Activated B cell treated with CpG ODN at 0.5 μM for 24 hours (primary cell): ENCODE measurements at regions of chr5 and their contacts with region 1.

Region 1: GRCh38 chr5:23139338-23140171 is 286.4 kb upstream of the CDH12 start:
- DNase-seq: no peak
- ATAC-seq: no peak
- H3K4me3 Mint-ChIP-seq: no peak overlapping the region
- H3K27ac Mint-ChIP-seq: no peak overlapping the region
- H3K4me1 Mint-ChIP-seq: no peaks in the 10 kb centered on the region
- H3K27me3 Mint-ChIP-seq: no peaks in the 10 kb centered on the region
- CTCF ChIP-seq: no peak

Region 2: GRCh38 chr5:21810737-21811316 is 1328.7 kb before region 1 on chr5:
- CTCF ChIA-PET with region 1: no interaction called
- POLR2A ChIA-PET with region 1: no interaction called
- intact Hi-C with region 1: loop called (anchors 2 kb)
- DNase-seq: no peak
- ATAC-seq: no peak
- H3K4me3 Mint-ChIP-seq: no peak overlapping the region
- H3K27ac Mint-ChIP-seq: no peak overlapping the region
- H3K4me1 Mint-ChIP-seq: no peaks in the 10 kb centered on the region
- H3K27me3 Mint-ChIP-seq: no peaks in the 10 kb centered on the region
- CTCF ChIP-seq: no peak

Region 3: DNA sequence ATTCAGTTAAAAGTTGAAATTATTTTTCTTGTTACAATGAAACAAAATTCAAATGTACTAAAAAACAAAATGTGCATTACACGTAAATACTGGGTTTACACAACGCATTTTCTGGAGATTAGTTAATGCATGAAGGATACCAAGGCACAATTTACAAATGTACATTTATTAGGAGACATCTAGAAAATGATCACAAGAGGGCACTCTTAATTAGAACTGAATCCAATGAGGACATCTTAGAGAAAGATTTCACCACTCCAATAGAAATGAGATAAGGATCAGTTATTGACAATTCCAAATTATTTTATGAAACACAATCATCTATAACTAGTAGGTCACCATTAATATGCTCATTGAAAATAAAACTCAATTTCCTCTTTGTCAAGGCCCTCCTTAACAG is 249.8 kb before region 1 on chr5:
- CTCF ChIA-PET with region 1: no interaction called
- POLR2A ChIA-PET with region 1: no interaction called
- intact Hi-C with region 1: loop called (anchors 1 kb)
- DNase-seq: no peak
- ATAC-seq: no peak
- H3K4me3 Mint-ChIP-seq: no peak overlapping the region
- H3K27ac Mint-ChIP-seq: no peak overlapping the region
- H3K4me1 Mint-ChIP-seq: no peaks in the 10 kb centered on the region
- H3K27me3 Mint-ChIP-seq: no peaks in the 10 kb centered on the region
- CTCF ChIP-seq: no peak

Region 4: GRCh38 chr5:23157169-23157568 is 17.6 kb after region 1 on chr5:
- CTCF ChIA-PET with region 1: no interaction called
- POLR2A ChIA-PET with region 1: no interaction called
- intact Hi-C with region 1: no loop called
- DNase-seq: no peak
- ATAC-seq: no peak
- H3K4me3 Mint-ChIP-seq: no peak overlapping the region
- H3K27ac Mint-ChIP-seq: no peak overlapping the region
- H3K4me1 Mint-ChIP-seq: no peaks in the 10 kb centered on the region
- H3K27me3 Mint-ChIP-seq: no peaks in the 10 kb centered on the region
- CTCF ChIP-seq: no peak

Region 5: DNA sequence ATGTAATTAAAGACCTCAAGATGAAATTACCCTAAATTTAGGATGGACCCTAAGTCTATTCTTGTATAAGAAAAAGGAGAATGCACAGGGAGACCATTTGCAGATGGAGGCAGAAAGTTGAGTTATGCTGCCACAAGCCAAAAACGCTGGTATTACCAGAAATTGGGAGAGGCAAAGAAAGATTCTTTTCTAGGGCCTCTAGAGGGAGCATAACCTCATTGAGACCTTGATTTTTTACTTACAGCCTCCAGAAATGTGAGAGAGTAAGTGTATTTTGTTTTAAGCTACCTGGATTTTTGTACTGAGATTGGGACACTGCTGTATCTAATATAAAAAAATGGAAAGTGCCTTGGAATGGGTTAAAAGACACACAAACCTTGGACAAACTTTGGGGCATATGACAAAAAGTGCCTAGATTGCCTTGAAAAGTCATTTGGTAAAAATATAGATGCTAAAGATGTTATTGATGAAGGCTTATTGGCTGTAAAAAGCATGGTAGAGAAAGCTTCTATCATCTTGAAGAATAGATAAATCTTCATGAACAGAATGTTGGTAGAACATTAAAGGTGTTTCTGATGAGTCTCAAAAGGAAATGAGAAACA is 193.2 kb after region 1 on chr5:
- CTCF ChIA-PET with region 1: no interaction called
- POLR2A ChIA-PET with region 1: no interaction called
- intact Hi-C with region 1: no loop called
- DNase-seq: no peak
- ATAC-seq: no peak
- H3K4me3 Mint-ChIP-seq: no peak overlapping the region
- H3K27ac Mint-ChIP-seq: no peak overlapping the region
- H3K4me1 Mint-ChIP-seq: no peaks in the 10 kb centered on the region
- H3K27me3 Mint-ChIP-seq: no peaks in the 10 kb centered on the region
- CTCF ChIP-seq: no peak

Region 6: DNA sequence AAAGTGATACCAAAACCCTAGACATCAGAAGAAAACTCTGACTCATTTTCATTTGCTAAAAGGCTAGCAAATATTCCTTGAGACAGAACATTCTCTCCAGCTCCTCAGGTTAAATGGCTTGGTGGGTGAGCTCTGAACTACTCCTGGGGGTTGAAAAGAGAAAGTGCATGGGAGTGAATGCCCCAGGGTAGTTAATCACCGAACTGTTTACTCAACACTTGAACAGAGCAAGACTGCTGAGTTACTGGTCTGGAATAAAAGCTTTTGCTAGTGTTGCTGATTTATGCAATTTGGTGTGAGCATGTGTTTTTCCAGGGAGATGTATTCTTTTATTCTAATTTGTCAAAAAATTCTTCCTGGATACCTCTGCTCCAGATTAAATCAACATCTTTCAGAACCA is 279.6 kb after region 1 on chr5:
- CTCF ChIA-PET with region 1: no interaction called
- POLR2A ChIA-PET with region 1: no interaction called
- intact Hi-C with region 1: no loop called
- DNase-seq: no peak
- ATAC-seq: no peak
- H3K4me3 Mint-ChIP-seq: no peak overlapping the region
- H3K27ac Mint-ChIP-seq: no peak overlapping the region
- H3K4me1 Mint-ChIP-seq: no peaks in the 10 kb centered on the region
- H3K27me3 Mint-ChIP-seq: no peaks in the 10 kb centered on the region
- CTCF ChIP-seq: no peak